Posterior vena cava (tissue), 2 donors: ENCODE measurements at regions of chr11 and their contacts with region 1.

Region 1: GRCh38 chr11:61336171-61336922 is 3.3 kb downstream of the TKFC start:
- DNase-seq: peak; percentile 92

Region 2: GRCh38 chr11:61384271-61385242 is 48.2 kb after region 1 on chr11:
- intact Hi-C with region 1: loop called (anchors 2 kb)
- DNase-seq: no peak